T-cell (primary cell): ENCODE measurements at regions of chr13 and their contacts with region 1.

Region 1: GRCh38 chr13:65638572-65639168 is 1591.5 kb downstream of the PCDH9 start:
- DNase-seq: no peak
- ATAC-seq: no peak
- H3K4me3 ChIP-seq: no peak overlapping the region
- H3K4me3 Mint-ChIP-seq: no peak overlapping the region
- H3K27ac ChIP-seq: no peak overlapping the region
- H3K27ac Mint-ChIP-seq: no peak overlapping the region
- H3K4me1 ChIP-seq: no peaks in the 10 kb centered on the region
- H3K4me1 Mint-ChIP-seq: no peaks in the 10 kb centered on the region
- H3K27me3 ChIP-seq: no peaks in the 10 kb centered on the region
- H3K27me3 Mint-ChIP-seq: no peaks in the 10 kb centered on the region

Region 2: GRCh38 chr13:65697843-65698242 is 59.2 kb after region 1 on chr13:
- CTCF ChIA-PET with region 1: no interaction called
- POLR2A ChIA-PET with region 1: interaction called in 1 of 2 experiments, 10 read pairs
- DNase-seq: no peak
- ATAC-seq: no peak
- H3K4me3 ChIP-seq: no peak overlapping the region
- H3K4me3 Mint-ChIP-seq: no peak overlapping the region
- H3K27ac ChIP-seq: no peak overlapping the region
- H3K27ac Mint-ChIP-seq: no peak overlapping the region
- H3K4me1 ChIP-seq: no peaks in the 10 kb centered on the region
- H3K4me1 Mint-ChIP-seq: no peaks in the 10 kb centered on the region
- H3K27me3 ChIP-seq: no peaks in the 10 kb centered on the region
- H3K27me3 Mint-ChIP-seq: no peaks in the 10 kb centered on the region

Region 3: GRCh38 chr13:65965501-65965900 is 326.8 kb after region 1 on chr13:
- CTCF ChIA-PET with region 1: no interaction called
- POLR2A ChIA-PET with region 1: no interaction called
- DNase-seq: no peak
- ATAC-seq: no peak
- H3K4me3 ChIP-seq: no peak overlapping the region
- H3K4me3 Mint-ChIP-seq: no peak overlapping the region
- H3K27ac ChIP-seq: no peak overlapping the region
- H3K27ac Mint-ChIP-seq: no peak overlapping the region
- H3K4me1 ChIP-seq: no peaks in the 10 kb centered on the region
- H3K4me1 Mint-ChIP-seq: no peaks in the 10 kb centered on the region
- H3K27me3 ChIP-seq: no peaks in the 10 kb centered on the region
- H3K27me3 Mint-ChIP-seq: no peaks in the 10 kb centered on the region